ENCODE measurements at regions of chr3 and their contacts with region 1.

Region 1: GRCh38 chr3:66276705-66277274 is 56.0 kb downstream of the SLC25A26 start:
- DNase-seq: peak; percentile 3 to 26 (median 21)
- H3K4me3 ChIP-seq: no peak overlapping the region
- H3K4me3 Mint-ChIP-seq: no peak overlapping the region
- H3K27ac ChIP-seq: no peak overlapping the region
- H3K27ac Mint-ChIP-seq: no peak overlapping the region
- H3K4me1 ChIP-seq: no peaks in the 10 kb centered on the region
- H3K4me1 Mint-ChIP-seq: no peaks in the 10 kb centered on the region
- H3K27me3 ChIP-seq: no peaks in the 10 kb centered on the region
- H3K27me3 Mint-ChIP-seq: no peaks in the 10 kb centered on the region
- CTCF ChIP-seq: peak; percentile 66

Region 2: GRCh38 chr3:66165660-66166059 is 111.1 kb before region 1 on chr3:
- intact Hi-C with region 1: no loop called
- DNase-seq: no peak
- H3K4me3 ChIP-seq: no peak overlapping the region
- H3K4me3 Mint-ChIP-seq: no peak overlapping the region
- H3K27ac ChIP-seq: no peak overlapping the region
- H3K27ac Mint-ChIP-seq: no peak overlapping the region
- H3K4me1 ChIP-seq: no peaks in the 10 kb centered on the region
- H3K4me1 Mint-ChIP-seq: no peaks in the 10 kb centered on the region
- H3K27me3 ChIP-seq: no peaks in the 10 kb centered on the region
- H3K27me3 Mint-ChIP-seq: peaks cover 0 to 1% (median 0%) of the 10 kb centered on the region in 3 donors
- CTCF ChIP-seq: no peak

Region 3: DNA sequence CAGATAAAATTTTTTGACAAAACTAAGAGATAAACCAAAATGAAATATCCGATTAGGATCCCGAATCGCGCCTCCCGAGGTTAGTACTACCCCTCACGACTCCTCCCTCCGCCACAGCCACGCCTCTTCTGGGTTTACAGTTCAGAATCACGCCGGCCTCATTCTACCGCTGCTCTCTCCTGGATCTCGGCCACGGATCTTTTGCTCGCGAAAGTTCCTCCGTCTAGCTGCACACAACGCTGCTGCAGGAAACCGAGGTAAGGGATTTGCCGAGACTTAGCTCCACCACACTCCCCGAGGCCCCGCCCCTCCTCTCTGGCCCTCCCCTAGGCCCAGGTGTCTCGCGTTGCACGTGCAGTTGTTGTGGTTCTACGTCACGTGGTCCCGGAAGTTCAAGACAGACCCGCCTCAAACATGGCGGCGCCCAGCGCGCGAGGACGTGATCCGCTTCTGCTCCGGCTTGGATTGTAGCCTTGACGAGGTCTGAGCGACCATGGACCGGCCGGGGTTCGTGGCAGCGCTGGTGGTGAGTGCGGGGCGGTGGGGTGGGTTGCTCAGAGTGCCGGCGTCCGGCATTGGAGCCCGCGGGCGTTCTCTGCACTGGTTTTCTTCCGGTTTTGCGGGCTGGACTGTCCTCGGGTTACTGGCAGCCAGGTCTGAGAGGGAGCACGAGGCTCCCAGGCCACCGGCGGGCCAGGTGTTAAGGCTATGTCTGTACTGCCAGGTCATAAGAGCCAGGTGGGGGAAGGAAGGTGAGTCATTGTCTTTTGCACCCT is 56.0 kb before region 1 on chr3 and contains the start of gene SLC25A26:
- intact Hi-C with region 1: no loop called
- DNase-seq: peak; percentile 82 to 87 (median 84)
- H3K4me3 ChIP-seq: peak within 1 kb of the TSS; percentile 78 to 85 (median 79)
- H3K4me3 Mint-ChIP-seq: peak within 1 kb of the TSS; percentile 98 to 99
- H3K27ac ChIP-seq: peak within 1 kb of the TSS; percentile 61 to 79
- H3K27ac Mint-ChIP-seq: peak within 1 kb of the TSS; percentile 90 to 94 (median 93)
- H3K4me1 ChIP-seq: peaks cover 7 to 8% of the 10 kb centered on the region in 2 donors
- H3K4me1 Mint-ChIP-seq: peaks cover 11% of the 10 kb centered on the region
- H3K27me3 ChIP-seq: peaks cover 2 to 4% of the 10 kb centered on the region in 2 donors
- H3K27me3 Mint-ChIP-seq: peaks cover 0 to 7% (median 7%) of the 10 kb centered on the region in 3 donors
- CTCF ChIP-seq: no peak
- polyA plus RNA-seq, gene SLC25A26: 11.6 to 23.0 (median 14.4) TPM

Region 4: DNA sequence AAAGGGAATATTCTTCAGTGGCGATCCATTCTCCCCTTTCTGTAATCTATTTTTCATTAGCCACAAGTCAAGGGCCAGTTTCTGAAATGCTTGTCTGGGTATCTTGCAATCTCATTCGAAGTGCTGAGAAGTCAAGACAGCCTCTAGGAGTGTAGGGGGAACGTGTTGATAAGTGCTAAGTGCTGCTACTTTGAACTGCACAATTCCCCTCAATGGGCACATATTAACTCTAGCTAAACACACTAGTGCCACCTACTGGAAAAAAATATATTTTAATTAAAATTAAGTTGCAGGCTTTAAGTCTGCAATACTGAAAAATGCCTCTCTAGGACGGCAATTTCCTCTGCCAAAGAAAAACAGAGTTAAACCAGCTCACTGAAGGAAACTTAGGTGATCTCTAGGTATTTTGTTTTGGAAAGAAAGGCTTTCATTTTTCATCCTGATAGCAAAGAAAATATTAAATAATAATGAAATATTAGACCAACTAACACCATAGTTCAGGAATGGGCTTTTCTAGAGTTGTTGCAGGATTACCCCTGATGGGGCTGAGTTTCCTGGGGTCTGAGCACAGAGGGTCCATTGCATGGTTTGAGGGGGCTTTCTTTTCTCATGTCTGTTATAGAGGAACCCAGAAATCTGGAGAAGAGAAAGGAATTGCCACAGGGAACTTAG is 539.4 kb after region 1 on chr3:
- intact Hi-C with region 1: loop called (anchors 5 kb)
- DNase-seq: peak; percentile 3 to 44 (median 25)
- H3K4me3 ChIP-seq: no peak overlapping the region
- H3K4me3 Mint-ChIP-seq: no peak overlapping the region
- H3K27ac ChIP-seq: no peak overlapping the region
- H3K27ac Mint-ChIP-seq: no peak overlapping the region
- H3K4me1 ChIP-seq: no peaks in the 10 kb centered on the region
- H3K4me1 Mint-ChIP-seq: no peaks in the 10 kb centered on the region
- H3K27me3 ChIP-seq: no peaks in the 10 kb centered on the region
- H3K27me3 Mint-ChIP-seq: peaks cover 2 to 7% (median 3%) of the 10 kb centered on the region in 3 donors
- CTCF ChIP-seq: peak; percentile 76

Measured in CD14-positive monocyte (primary cell).